BJ (cell line): ENCODE measurements at regions of chr15 and their contacts with region 1.

Region 1: DNA sequence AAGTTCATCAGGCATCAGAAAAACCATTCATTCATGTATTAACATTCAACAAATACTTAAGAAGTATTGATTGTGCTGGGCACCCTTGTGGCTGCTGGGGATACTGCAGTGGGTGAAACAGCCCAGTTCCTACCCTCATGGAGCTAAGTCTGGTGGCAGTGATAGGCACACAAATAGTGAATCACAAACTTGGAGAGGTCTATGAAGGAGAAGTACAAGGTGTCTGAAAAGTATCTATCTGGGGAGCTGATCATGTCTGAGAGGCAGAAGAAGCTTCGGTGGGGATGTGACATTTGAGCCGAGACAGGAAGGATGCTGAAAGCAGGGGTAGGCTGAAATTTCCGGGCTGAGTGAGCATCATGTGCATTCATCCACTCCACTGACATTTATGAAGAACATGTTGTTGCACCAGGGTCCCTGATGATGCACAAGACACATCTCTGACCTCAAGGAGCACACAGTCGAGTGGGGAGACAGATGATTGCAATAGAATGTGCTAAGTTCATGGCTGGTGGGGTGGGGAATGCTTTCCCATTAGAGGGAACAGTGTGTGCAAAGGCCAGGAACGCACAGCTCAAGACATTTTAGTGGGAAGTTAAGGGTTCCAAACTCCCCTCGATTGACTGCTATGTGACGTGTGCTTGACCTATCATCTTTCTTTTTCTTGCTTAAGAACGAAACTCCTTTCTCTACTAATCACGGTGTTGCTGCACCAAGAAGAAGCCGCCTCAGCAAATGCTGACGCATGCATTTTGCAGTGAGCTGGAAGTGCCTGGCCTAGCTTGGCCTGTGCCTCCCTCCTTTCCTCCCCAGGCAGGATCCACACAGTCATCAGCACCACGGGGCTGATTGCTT is 309.1 kb upstream of the ICE2 start:
- DNase-seq: no peak
- H3K4me3 ChIP-seq: no peak overlapping the region
- H3K27me3 ChIP-seq: no peaks in the 10 kb centered on the region
- CTCF ChIP-seq: peak; percentile 40

Region 2: DNA sequence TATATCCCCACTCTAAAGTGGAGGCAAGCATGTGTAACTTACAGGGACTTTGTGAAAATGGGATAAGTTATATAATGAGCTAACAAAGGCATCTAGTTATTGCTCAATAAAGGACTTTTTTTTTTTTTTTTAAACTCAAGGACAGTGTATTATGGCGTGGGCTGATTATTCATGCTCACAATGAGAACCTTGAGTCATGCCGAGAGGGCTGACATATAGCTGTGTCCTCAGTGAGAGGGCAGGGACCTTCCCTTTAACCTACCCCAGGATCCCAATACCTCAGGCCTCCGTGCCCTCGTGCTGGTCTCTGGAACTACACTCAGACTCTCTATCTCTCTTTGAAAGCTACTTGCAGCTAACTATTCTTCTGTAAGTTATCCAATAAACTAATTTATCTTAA is 10.8 kb after region 1 on chr15:
- CTCF ChIA-PET with region 1: interaction called, 13 read pairs
- POLR2A ChIA-PET with region 1: no interaction called
- DNase-seq: peak; percentile 33
- H3K4me3 ChIP-seq: no peak overlapping the region
- H3K27me3 ChIP-seq: no peaks in the 10 kb centered on the region
- CTCF ChIP-seq: no peak